ENCODE measurements at regions of chr17 and their contacts with region 1.

Region 1: GRCh38 chr17:43360739-43361505 is 37.9 kb upstream of the ARL4D start:
- DNase-seq: peak; percentile 90 to 98 (median 93)
- H3K4me3 ChIP-seq: peak overlapping the region; percentile 68 to 77
- H3K4me3 Mint-ChIP-seq: peak overlapping the region; percentile 90 to 99 (median 94)
- H3K27ac ChIP-seq: peak overlapping the region; percentile 93
- H3K27ac Mint-ChIP-seq: peak overlapping the region; percentile 97 to 100 (median 99)
- H3K4me1 ChIP-seq: peaks cover 17% of the 10 kb centered on the region
- H3K4me1 Mint-ChIP-seq: peaks cover 14 to 35% (median 24%) of the 10 kb centered on the region in 4 donors
- H3K27me3 ChIP-seq: no peaks in the 10 kb centered on the region
- H3K27me3 Mint-ChIP-seq: no peaks in the 10 kb centered on the region

Region 2: GRCh38 chr17:42832974-42833766 is 527.8 kb before region 1 on chr17 and contains the start of gene PSME3:
- CTCF ChIA-PET with region 1: interaction called, 3 read pairs
- POLR2A ChIA-PET with region 1: interaction called, 10 read pairs
- intact Hi-C with region 1: no loop called
- DNase-seq: peak; percentile 88 to 92 (median 90)
- H3K4me3 ChIP-seq: peak within 1 kb of the TSS; percentile 72 to 97
- H3K4me3 Mint-ChIP-seq: peak within 1 kb of the TSS; percentile 93 to 97 (median 96)
- H3K27ac ChIP-seq: peak within 1 kb of the TSS; percentile 94
- H3K27ac Mint-ChIP-seq: peak within 1 kb of the TSS; percentile 99 to 100 (median 99)
- H3K4me1 ChIP-seq: peaks cover 17% of the 10 kb centered on the region
- H3K4me1 Mint-ChIP-seq: peaks cover 19 to 31% (median 25%) of the 10 kb centered on the region in 4 donors
- H3K27me3 ChIP-seq: no peaks in the 10 kb centered on the region
- H3K27me3 Mint-ChIP-seq: no peaks in the 10 kb centered on the region
- total RNA-seq, gene PSME3: 65.1 to 69.9 TPM

Region 3: DNA sequence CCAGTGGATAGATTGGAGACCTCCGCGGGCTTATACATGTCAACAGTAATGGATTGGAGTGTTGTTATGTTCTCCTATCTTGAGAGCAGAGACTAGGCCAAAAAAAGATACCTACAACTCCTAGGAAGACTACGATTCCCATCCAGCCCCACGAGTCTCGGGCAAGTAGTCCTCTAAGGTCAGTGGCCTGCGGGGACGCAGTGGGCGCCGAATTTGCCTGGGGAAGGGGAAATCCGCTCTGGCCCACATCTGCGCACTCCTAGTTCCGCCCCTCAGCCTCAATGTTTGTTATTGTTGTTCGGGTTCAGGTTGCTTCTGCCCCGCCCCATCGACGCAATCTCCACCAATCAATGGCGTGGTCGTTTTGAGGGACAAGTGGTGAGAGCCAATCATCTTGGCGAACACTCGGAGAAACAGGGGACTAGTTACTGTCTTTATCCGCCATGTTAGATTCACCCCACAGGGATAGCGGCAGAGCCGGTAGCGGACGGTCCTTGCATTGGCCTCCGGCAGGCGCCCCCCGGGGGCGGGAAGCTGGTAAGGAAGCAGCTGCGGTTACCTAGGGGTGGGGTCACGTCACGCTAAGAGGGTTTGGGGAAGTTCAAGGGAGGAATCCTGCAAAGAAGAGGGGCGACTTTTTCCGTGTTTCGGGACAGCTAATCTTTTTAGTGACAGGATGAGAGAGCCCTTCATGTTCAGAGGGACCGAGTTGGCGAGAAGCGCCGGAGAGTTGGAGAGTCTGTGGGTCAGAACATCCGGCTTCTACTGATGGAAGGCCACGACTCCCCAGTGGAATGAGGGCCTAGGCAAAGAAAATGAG is 189.9 kb before region 1 on chr17 and contains the start of gene NBR1:
- CTCF ChIA-PET with region 1: no interaction called
- POLR2A ChIA-PET with region 1: interaction called, 46 read pairs
- intact Hi-C with region 1: loop called (anchors 1 kb)
- DNase-seq: peak; percentile 97 to 99 (median 97)
- H3K4me3 ChIP-seq: peak within 1 kb of the TSS; percentile 80 to 85
- H3K4me3 Mint-ChIP-seq: no peak within 1 kb of the TSS
- H3K27ac ChIP-seq: peak within 1 kb of the TSS; percentile 99
- H3K27ac Mint-ChIP-seq: no peak within 1 kb of the TSS
- H3K4me1 ChIP-seq: peaks cover 40% of the 10 kb centered on the region
- H3K4me1 Mint-ChIP-seq: peaks cover 16 to 36% (median 23%) of the 10 kb centered on the region in 4 donors
- H3K27me3 ChIP-seq: no peaks in the 10 kb centered on the region
- H3K27me3 Mint-ChIP-seq: no peaks in the 10 kb centered on the region
- total RNA-seq, gene NBR1: 90.3 to 93.2 TPM

Region 4: DNA sequence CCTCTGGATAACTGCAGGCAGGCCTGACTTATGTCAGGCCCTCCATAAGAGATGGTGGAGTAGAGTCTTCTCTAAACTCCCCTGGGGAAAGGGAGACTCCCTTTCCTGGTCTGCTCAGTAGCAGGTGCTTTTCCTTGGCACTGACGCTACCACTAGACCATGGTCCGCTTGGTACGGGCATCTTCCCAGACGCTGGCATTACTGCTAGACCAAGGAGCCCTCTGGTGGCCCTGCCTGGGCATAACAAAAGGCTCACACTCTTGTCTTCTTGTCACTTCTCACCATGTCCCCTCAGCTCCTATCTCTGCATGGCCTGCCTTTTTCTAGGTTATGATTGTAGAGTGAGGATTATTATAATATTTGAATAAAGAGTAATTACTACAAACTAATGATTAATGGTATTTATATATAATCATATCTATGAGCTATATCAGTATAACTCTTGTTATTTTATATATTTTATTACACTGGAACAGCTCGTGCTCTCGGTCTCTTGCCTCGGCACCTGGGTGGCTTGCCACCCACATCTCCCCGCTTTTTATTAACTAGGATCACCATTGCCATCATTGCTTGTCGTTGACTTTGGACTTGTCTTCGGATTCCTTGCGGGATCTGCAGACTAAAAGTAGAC is 21.9 kb before region 1 on chr17:
- CTCF ChIA-PET with region 1: interaction called, 13 read pairs
- POLR2A ChIA-PET with region 1: interaction called, 14 read pairs
- intact Hi-C with region 1: no loop called
- DNase-seq: peak; percentile 45 to 63 (median 53)
- H3K4me3 ChIP-seq: no peak overlapping the region
- H3K4me3 Mint-ChIP-seq: no peak overlapping the region
- H3K27ac ChIP-seq: no peak overlapping the region
- H3K27ac Mint-ChIP-seq: no peak overlapping the region
- H3K4me1 ChIP-seq: peaks cover 2% of the 10 kb centered on the region
- H3K4me1 Mint-ChIP-seq: peaks cover 2 to 16% (median 7%) of the 10 kb centered on the region in 4 donors
- H3K27me3 ChIP-seq: no peaks in the 10 kb centered on the region
- H3K27me3 Mint-ChIP-seq: peaks cover 0 to 5% of the 10 kb centered on the region in 2 donors

Region 5: GRCh38 chr17:43393944-43394482 is 33.1 kb after region 1 on chr17:
- CTCF ChIA-PET with region 1: interaction called, 23 read pairs
- POLR2A ChIA-PET with region 1: interaction called, 265 read pairs
- intact Hi-C with region 1: loop called (anchors 1 kb)
- DNase-seq: peak; percentile 82 to 89 (median 86)
- H3K4me3 ChIP-seq: peak overlapping the region in 1 of 2 donors; percentile 30
- H3K4me3 Mint-ChIP-seq: peak overlapping the region in 4 of 8 donors; percentile 8 to 46 (median 30)
- H3K27ac ChIP-seq: no peak overlapping the region
- H3K27ac Mint-ChIP-seq: peak overlapping the region; percentile 27 to 73 (median 62)
- H3K4me1 ChIP-seq: peaks cover 41% of the 10 kb centered on the region
- H3K4me1 Mint-ChIP-seq: peaks cover 19 to 56% (median 35%) of the 10 kb centered on the region in 4 donors
- H3K27me3 ChIP-seq: no peaks in the 10 kb centered on the region
- H3K27me3 Mint-ChIP-seq: no peaks in the 10 kb centered on the region

Region 6: GRCh38 chr17:43423777-43424455 is 63.0 kb after region 1 on chr17:
- CTCF ChIA-PET with region 1: no interaction called
- POLR2A ChIA-PET with region 1: no interaction called
- intact Hi-C with region 1: no loop called
- DNase-seq: no peak
- H3K4me3 ChIP-seq: no peak overlapping the region
- H3K4me3 Mint-ChIP-seq: no peak overlapping the region
- H3K27ac ChIP-seq: no peak overlapping the region
- H3K27ac Mint-ChIP-seq: no peak overlapping the region
- H3K4me1 ChIP-seq: no peaks in the 10 kb centered on the region
- H3K4me1 Mint-ChIP-seq: no peaks in the 10 kb centered on the region
- H3K27me3 ChIP-seq: no peaks in the 10 kb centered on the region
- H3K27me3 Mint-ChIP-seq: peaks cover 3 to 6% of the 10 kb centered on the region in 2 donors

Measured in CD4-positive, alpha-beta memory T cell (primary cell).